CD4-positive, alpha-beta T cell (primary cell): ENCODE measurements at regions of chr5 and their contacts with region 1.

Region 1: DNA sequence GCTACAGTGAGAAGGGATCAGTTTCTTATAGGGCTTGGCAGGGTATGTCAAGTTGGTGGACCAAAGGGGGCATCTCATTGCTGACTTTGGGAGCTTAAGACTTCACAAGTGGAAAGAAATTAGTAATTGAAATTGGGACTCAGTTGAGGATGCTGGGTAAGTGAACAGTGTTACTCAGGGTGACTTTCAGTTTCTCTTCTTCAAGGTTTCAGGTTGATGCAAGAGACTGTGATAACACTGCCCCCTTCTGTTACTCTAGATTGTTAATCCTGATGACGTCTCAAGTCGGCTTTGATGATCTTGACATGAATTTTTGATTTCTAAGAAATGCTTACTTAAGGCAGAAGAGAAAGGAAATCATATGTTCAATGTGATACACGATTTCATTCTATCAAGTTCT is 21.3 kb downstream of the KCTD16 start:
- DNase-seq: peak in 5 of 14 experiments; percentile 19 to 92 (median 91)
- ATAC-seq: peak; percentile 39
- H3K4me3 ChIP-seq: peak overlapping the region; percentile 11
- H3K4me3 Mint-ChIP-seq: no peak overlapping the region
- H3K27ac ChIP-seq: peak overlapping the region; percentile 84 to 90
- H3K27ac Mint-ChIP-seq: no peak overlapping the region
- H3K4me1 ChIP-seq: peaks cover 42% of the 10 kb centered on the region
- H3K4me1 Mint-ChIP-seq: peaks cover 37% of the 10 kb centered on the region
- H3K27me3 ChIP-seq: no peaks in the 10 kb centered on the region
- H3K27me3 Mint-ChIP-seq: no peaks in the 10 kb centered on the region
- CTCF ChIP-seq: peak; percentile 72

Region 2: DNA sequence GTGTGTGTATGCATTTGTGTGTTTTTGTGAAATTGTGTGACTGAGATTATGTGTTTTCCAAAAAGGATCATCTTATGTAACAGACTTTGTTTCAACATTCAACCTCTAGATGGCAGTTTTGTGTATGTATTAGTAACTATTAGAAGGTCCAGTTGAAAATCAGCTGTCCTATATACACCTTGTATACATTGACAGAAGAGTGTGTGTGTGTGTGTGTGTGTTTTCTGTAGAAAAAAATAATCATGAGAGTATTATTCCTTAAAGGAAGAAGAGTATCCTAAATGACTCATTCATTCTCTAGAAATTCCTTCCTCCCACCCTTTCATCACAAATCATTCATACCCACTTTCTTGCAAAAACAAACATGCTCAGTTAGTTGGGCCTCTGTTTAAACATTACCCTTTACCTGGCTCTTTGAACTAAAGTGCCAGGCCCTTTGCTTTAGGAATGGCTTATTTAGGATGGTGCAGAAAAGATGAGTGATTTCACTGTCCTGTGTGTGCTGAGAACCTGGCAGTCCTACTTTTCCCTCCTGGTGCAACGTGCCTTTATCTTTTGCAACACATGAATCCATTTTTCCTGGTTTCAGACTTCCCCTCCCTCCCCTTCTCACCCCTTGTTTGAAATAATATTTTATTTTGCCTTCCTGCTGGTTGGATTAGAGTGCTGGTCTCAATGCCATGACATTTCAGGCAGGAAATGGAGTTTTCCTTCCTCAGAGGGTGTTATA is 1269.6 kb before region 1 on chr5:
- CTCF ChIA-PET with region 1: no interaction called
- POLR2A ChIA-PET with region 1: no interaction called
- intact Hi-C with region 1: loop called in 1 of 2 experiments (anchors 5 kb)
- DNase-seq: peak in 3 of 14 experiments; percentile 49 to 61 (median 50)
- ATAC-seq: no peak
- H3K4me3 ChIP-seq: no peak overlapping the region
- H3K4me3 Mint-ChIP-seq: no peak overlapping the region
- H3K27ac ChIP-seq: no peak overlapping the region
- H3K27ac Mint-ChIP-seq: no peak overlapping the region
- H3K4me1 ChIP-seq: no peaks in the 10 kb centered on the region
- H3K4me1 Mint-ChIP-seq: peaks cover 22% of the 10 kb centered on the region
- H3K27me3 ChIP-seq: no peaks in the 10 kb centered on the region
- H3K27me3 Mint-ChIP-seq: no peaks in the 10 kb centered on the region
- CTCF ChIP-seq: peak; percentile 50

Region 3: GRCh38 chr5:143229896-143230675 is 961.9 kb before region 1 on chr5:
- CTCF ChIA-PET with region 1: no interaction called
- POLR2A ChIA-PET with region 1: no interaction called
- intact Hi-C with region 1: loop called (anchors 10 kb)
- DNase-seq: peak in 8 of 14 experiments; percentile 5 to 75 (median 41)
- ATAC-seq: peak; percentile 93
- H3K4me3 ChIP-seq: no peak overlapping the region
- H3K4me3 Mint-ChIP-seq: peak overlapping the region; percentile 65
- H3K27ac ChIP-seq: peak overlapping the region in 1 of 2 donors; percentile 40
- H3K27ac Mint-ChIP-seq: peak overlapping the region; percentile 86
- H3K4me1 ChIP-seq: peaks cover 22% of the 10 kb centered on the region
- H3K4me1 Mint-ChIP-seq: peaks cover 34% of the 10 kb centered on the region
- H3K27me3 ChIP-seq: no peaks in the 10 kb centered on the region
- H3K27me3 Mint-ChIP-seq: no peaks in the 10 kb centered on the region
- CTCF ChIP-seq: no peak

Region 4: DNA sequence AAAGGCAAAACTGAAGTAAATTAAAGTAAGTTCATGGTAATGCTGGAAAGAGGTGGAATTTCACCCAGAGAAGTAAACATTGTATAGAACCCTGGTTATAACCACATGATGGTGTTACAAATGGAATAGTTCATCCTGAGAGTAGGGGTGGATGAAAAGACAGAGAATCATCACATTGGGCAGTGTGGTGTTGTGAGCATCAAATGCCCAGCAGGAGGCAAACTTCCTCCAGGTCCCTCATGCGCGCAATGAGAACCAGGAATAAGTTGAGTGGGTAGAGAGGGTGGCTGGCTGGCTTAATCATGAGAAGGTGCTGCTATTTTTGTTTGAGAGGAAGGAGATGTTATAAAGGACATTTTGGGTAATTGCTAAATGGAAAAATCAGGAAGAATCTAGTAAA is 543.3 kb before region 1 on chr5:
- CTCF ChIA-PET with region 1: no interaction called
- POLR2A ChIA-PET with region 1: no interaction called
- intact Hi-C with region 1: loop called in 1 of 2 experiments (anchors 5 kb)
- DNase-seq: peak in 4 of 14 experiments; percentile 8 to 21 (median 14)
- ATAC-seq: no peak
- H3K4me3 ChIP-seq: no peak overlapping the region
- H3K4me3 Mint-ChIP-seq: no peak overlapping the region
- H3K27ac ChIP-seq: no peak overlapping the region
- H3K27ac Mint-ChIP-seq: no peak overlapping the region
- H3K4me1 ChIP-seq: no peaks in the 10 kb centered on the region
- H3K4me1 Mint-ChIP-seq: no peaks in the 10 kb centered on the region
- H3K27me3 ChIP-seq: no peaks in the 10 kb centered on the region
- H3K27me3 Mint-ChIP-seq: no peaks in the 10 kb centered on the region
- CTCF ChIP-seq: no peak

Region 5: DNA sequence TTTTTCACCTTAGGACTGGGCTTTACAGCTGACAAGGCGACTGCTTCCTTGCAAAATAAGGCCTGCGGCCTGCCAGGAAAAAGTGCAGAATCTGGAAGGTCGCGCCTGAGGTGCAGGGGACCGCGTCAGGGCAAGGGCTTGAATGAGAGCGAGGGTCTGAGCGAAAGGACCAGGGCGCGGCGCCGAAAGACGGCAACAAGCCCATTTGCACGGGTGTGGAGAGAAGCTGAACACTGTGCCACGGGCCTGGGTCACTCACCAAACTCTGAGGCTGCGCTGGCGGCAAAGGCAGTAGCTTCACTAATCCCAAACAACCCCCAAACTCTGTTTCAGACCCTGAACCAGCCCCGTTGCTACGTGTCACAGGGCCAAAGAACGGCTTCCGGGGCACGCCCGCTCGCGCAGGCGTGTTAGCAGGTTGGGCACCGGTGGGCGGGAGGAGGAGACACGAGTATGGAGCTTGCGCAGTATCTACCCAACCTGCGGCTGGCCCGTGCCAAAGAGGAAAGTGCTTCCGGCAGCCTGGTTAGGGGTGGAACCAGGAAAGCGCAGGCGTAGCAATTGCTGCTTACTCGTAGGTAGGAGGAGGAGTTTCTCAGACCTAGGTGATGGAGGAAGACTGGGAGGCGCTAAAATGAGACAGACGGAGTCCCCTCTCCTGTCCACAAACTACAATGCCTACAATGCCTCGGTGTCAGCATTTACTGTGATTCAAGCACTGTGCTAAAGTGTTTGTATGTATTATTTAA is 21.5 kb before region 1 on chr5 and contains the starts of genes KCTD16 and YIPF5:
- CTCF ChIA-PET with region 1: interaction called, 10 read pairs
- POLR2A ChIA-PET with region 1: interaction called, 115 read pairs
- intact Hi-C with region 1: loop called in 1 of 2 experiments (anchors 1 kb)
- DNase-seq: peak; percentile 93 to 99 (median 96)
- ATAC-seq: peak; percentile 96
- H3K4me3 ChIP-seq: peak within 1 kb of the TSS; percentile 79
- H3K4me3 Mint-ChIP-seq: peak within 1 kb of the TSS; percentile 95
- H3K27ac ChIP-seq: peak within 1 kb of the TSS; percentile 91
- H3K27ac Mint-ChIP-seq: peak within 1 kb of the TSS; percentile 95
- H3K4me1 ChIP-seq: peaks cover 11% of the 10 kb centered on the region
- H3K4me1 Mint-ChIP-seq: peaks cover 53% of the 10 kb centered on the region
- H3K27me3 ChIP-seq: no peaks in the 10 kb centered on the region
- H3K27me3 Mint-ChIP-seq: no peaks in the 10 kb centered on the region
- CTCF ChIP-seq: no peak
- total RNA-seq, gene KCTD16: not detected
- total RNA-seq, gene YIPF5: 57.6 to 64.8 TPM

Region 6: DNA sequence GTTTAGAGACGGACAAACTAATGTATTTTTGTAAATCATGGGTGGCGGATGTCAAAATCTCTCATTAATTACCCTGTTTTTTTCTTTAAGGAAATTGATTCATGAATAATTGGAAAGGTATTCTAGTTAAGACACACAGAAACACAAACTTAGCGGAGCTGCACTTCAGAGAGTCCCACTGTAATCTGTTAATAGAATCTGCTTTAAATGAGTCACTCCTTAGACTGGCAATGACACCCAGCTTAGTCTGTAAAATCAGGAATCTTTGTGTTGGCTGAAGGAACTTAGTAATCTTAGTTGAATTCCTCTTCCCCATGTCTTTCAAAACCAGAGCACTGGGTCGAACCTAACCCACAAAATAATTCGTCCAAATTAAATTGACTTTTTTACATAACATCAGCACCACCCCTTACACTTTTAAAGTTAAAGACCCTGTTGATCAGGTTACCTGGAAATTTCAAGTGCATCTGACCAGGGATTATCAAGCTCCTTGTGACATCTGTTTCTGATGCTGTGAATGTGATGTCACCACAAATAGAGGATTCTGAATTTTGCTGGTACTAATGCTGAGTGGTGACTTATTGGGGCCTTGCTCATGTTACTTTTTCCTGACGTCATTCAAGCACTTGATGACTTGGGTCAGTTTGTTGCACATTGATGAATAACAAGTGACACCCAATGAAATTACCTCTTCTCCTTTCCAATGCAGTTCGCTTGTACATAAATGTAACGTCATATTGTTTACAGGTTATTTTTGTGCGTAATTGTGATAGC is 292.3 kb after region 1 on chr5:
- CTCF ChIA-PET with region 1: no interaction called
- POLR2A ChIA-PET with region 1: no interaction called
- intact Hi-C with region 1: no loop called
- DNase-seq: no peak
- ATAC-seq: no peak
- H3K4me3 ChIP-seq: no peak overlapping the region
- H3K4me3 Mint-ChIP-seq: no peak overlapping the region
- H3K27ac ChIP-seq: no peak overlapping the region
- H3K27ac Mint-ChIP-seq: no peak overlapping the region
- H3K4me1 ChIP-seq: no peaks in the 10 kb centered on the region
- H3K4me1 Mint-ChIP-seq: no peaks in the 10 kb centered on the region
- H3K27me3 ChIP-seq: no peaks in the 10 kb centered on the region
- H3K27me3 Mint-ChIP-seq: peaks cover 3% of the 10 kb centered on the region
- CTCF ChIP-seq: no peak